ENCODE measurements at regions of chr3 and their contacts with region 1.

Region 1: DNA sequence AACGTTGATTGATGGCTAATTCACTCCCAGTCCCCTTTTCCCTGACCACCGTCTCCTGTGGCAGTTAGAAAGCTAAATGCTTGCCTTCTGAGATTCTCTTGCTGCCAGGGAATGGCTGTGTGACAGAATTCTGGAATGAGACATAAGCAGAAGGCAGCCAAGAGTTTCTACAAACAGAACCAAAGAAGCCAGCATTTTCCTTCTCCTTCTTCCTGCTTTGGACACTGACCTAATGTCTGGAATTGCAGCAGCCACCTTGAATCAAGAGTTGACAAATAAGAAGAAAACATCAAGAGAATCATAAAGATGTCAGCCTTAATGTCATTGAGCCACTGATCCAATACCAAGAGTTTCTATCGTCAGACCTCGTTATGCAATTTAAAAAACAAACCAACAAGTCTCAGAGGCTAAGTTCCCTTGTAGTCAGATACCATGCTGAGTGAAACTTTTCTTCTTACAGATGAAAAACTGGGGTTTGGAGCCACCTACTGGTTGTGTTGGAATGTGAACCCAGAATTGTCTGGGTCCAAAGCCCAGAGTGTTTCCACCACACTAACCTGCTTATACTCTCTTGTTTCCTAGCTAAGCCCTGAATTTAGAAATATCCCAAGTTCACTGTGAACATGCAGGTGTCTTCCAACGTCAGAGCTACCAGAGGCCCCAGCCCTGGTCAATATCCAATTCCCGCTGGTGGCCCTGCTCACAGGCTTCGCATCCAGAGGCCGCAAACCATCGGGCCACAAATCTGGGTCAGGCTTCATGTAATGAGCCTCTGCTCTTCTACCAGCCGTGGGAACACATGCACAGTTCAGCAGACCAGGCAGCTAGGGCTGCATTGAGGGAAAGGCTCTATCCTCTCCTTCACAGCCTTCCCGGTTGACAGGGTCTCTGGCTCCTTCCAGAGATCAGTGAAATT is 42.5 kb downstream of the MCF2L2 start:
- DNase-seq: no peak
- ATAC-seq: peak; percentile 93 to 94 (median 94)
- H3K4me3 ChIP-seq: no peak overlapping the region
- H3K27ac ChIP-seq: no peak overlapping the region
- H3K4me1 ChIP-seq: no peaks in the 10 kb centered on the region
- H3K27me3 ChIP-seq: no peaks in the 10 kb centered on the region
- CTCF ChIP-seq: peak; percentile 71 to 86 (median 77)
- POLR2A ChIP-seq: no peak

Region 2: GRCh38 chr3:183122257-183122932 is 263.6 kb before region 1 on chr3:
- intact Hi-C with region 1: loop called in 1 of 2 experiments (anchors 5 kb)
- DNase-seq: no peak
- ATAC-seq: peak; percentile 78 to 87 (median 80)
- H3K4me3 ChIP-seq: no peak overlapping the region
- H3K27ac ChIP-seq: no peak overlapping the region
- H3K4me1 ChIP-seq: no peaks in the 10 kb centered on the region
- H3K27me3 ChIP-seq: no peaks in the 10 kb centered on the region
- CTCF ChIP-seq: peak; percentile 85 to 88 (median 87)
- POLR2A ChIP-seq: no peak

Region 3: DNA sequence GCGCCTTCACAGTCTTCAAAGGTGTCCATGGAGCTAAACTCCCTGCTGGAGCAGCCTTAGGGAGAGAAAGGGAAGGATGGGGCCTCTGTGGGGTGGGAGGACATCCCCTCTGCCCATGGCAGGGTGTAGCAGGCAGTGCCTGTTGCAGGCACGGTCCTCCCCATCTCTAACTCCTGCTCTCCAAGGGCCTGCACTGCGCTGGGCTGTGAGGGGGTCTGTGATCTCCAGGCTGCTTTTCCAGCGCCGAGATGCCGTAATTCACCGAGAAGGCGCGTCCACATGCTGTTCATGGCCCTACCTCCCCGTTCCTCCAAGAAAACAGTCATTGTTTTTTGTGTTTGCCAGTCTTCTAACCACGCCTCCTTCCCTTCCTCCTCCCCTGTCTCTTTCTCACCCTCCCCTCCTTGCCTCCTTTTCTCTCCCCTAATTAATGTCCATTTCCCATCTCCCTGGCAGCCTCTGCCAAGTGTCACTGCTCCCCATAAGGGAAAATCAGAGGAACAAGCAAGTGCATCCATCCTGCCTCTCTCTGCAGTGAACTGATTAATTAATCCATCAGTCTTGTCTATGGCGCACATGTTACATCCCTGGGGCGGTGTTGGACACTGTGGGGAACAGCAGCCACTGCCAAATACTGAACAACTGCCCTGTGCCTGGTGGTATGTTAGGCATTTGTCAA is 205.7 kb before region 1 on chr3:
- intact Hi-C with region 1: loop called in 1 of 2 experiments (anchors 5 kb)
- DNase-seq: peak in 1 of 3 donors; percentile 25
- ATAC-seq: peak in 1 of 4 donors; percentile 15
- H3K4me3 ChIP-seq: no peak overlapping the region
- H3K27ac ChIP-seq: no peak overlapping the region
- H3K4me1 ChIP-seq: peaks cover 0 to 8% (median 0%) of the 10 kb centered on the region in 4 donors
- H3K27me3 ChIP-seq: peaks cover 6 to 13% of the 10 kb centered on the region in 2 donors
- CTCF ChIP-seq: no peak
- POLR2A ChIP-seq: no peak

Region 4: DNA sequence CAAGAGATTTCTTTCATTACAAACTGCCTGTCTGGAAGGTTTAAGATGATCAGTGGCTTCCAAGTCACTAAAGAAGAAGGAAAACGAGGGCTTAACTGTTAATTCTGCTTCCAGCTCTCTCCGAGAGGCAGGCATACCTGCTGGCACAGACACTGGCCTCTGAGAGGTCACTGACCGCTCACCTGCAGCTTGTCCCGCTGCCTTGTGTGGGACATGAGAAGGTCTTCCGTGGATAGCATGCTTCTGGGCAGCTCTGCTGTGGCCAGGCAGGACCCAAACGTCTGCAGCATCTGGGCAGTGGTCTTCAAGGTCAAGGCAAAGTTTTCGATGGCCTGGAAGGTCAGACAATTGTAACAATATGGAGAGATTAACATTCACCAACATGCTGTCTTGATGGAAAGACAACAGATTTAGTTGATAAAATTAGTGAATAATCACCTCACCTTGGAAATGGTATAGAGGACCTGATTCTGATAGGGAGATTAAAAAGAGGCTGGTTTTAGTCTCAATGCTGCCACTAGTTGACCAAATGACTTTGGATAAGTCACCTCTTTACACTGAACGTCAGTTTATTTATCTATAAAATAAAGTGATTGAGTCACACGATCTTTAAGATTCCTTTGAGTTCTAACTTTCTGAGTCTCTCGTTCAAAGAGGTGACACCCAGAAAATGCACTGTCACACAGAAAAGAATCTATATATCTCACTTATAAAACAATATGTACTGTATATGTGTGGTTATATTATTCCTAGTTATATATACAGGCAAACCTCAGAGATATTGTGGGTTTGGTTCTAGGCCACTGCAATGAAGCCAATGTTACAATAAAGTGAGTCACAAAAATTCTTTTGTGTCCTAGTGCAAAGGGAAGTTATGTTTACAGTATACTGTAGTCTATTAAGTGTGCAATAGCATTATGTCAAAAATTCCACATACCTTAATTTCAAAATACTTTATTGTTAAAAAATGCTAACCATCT is 67.8 kb before region 1 on chr3:
- intact Hi-C with region 1: no loop called
- DNase-seq: no peak
- ATAC-seq: peak in 2 of 4 donors; percentile 39 to 45
- H3K4me3 ChIP-seq: no peak overlapping the region
- H3K27ac ChIP-seq: no peak overlapping the region
- H3K4me1 ChIP-seq: no peaks in the 10 kb centered on the region
- H3K27me3 ChIP-seq: no peaks in the 10 kb centered on the region
- CTCF ChIP-seq: no peak
- POLR2A ChIP-seq: no peak

Region 5: GRCh38 chr3:183688871-183689270 is 302.9 kb after region 1 on chr3:
- intact Hi-C with region 1: no loop called
- DNase-seq: no peak
- ATAC-seq: peak in 2 of 4 donors; percentile 30 to 52
- H3K4me3 ChIP-seq: no peak overlapping the region
- H3K27ac ChIP-seq: no peak overlapping the region
- H3K4me1 ChIP-seq: peaks cover 0 to 4% (median 0%) of the 10 kb centered on the region in 4 donors
- H3K27me3 ChIP-seq: no peaks in the 10 kb centered on the region
- CTCF ChIP-seq: no peak
- POLR2A ChIP-seq: no peak